ENCODE measurements at regions of chr11 and their contacts with region 1.

Region 1: GRCh38 chr11:6362873-6363678 is 27.2 kb upstream of the SMPD1 start:
- DNase-seq: peak; percentile 81 to 82
- ATAC-seq: peak; percentile 95 to 99
- H3K4me3 ChIP-seq: no peak overlapping the region
- H3K27ac ChIP-seq: no peak overlapping the region
- H3K4me1 ChIP-seq: peaks cover 10% of the 10 kb centered on the region; the same call in 2 of the 3 replicates
- CTCF ChIP-seq: peak; percentile 81
- EP300 ChIP-seq: no peak
- POLR2A ChIP-seq: no peak
- RAD21 ChIP-seq: peak; percentile 79 to 87

Region 2: GRCh38 chr11:6022956-6023355 is 340.1 kb before region 1 on chr11:
- CTCF ChIA-PET with region 1: interaction called, 50 read pairs
- POLR2A ChIA-PET with region 1: no interaction called
- DNase-seq: peak; percentile 13 to 57
- ATAC-seq: peak; percentile 82
- H3K4me3 ChIP-seq: no peak overlapping the region
- H3K27ac ChIP-seq: no peak overlapping the region
- H3K4me1 ChIP-seq: no peaks in the 10 kb centered on the region
- CTCF ChIP-seq: peak; percentile 46
- EP300 ChIP-seq: no peak
- POLR2A ChIP-seq: no peak
- RAD21 ChIP-seq: peak; percentile 61 to 68

Region 3: DNA sequence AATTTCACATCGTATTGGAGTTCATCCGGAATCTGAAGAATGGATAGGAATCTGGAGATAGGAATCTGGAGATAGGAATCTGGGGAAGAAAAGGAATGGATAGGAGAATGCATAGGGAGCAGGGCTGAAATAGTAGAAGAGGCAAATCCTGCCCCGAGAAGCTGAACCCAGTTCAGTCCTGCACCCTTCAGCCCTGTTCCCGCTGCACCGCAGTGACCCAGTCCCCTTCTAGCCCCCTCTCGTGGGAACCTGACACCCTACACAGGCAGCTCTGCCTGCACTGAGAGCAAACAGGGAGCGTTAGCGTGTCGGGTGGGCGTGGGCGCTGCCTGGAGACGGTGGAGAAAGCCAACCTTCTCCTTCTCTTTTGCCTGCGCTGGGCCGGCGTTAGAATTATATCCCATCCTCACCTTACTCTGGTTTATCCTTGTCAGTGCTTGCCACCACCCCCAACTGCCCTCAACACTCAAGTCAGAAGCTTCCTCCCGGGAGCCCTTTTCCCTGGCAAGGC is 104.5 kb before region 1 on chr11:
- CTCF ChIA-PET with region 1: interaction called, 12 read pairs
- POLR2A ChIA-PET with region 1: no interaction called
- DNase-seq: no peak
- ATAC-seq: peak in 1 of 2 experiments; percentile 39; a peak in 3 of 6 replicates
- H3K4me3 ChIP-seq: peak overlapping the region; percentile 47
- H3K27ac ChIP-seq: no peak overlapping the region
- H3K4me1 ChIP-seq: no peaks in the 10 kb centered on the region; the same call in 2 of the 3 replicates
- CTCF ChIP-seq: no peak
- EP300 ChIP-seq: no peak
- POLR2A ChIP-seq: no peak
- RAD21 ChIP-seq: no peak

Region 4: GRCh38 chr11:6285019-6285418 is 78.1 kb before region 1 on chr11:
- CTCF ChIA-PET with region 1: no interaction called
- POLR2A ChIA-PET with region 1: no interaction called
- DNase-seq: no peak
- ATAC-seq: no peak
- H3K4me3 ChIP-seq: no peak overlapping the region
- H3K27ac ChIP-seq: no peak overlapping the region
- H3K4me1 ChIP-seq: peaks cover 9% of the 10 kb centered on the region; the same call in 1 of the 3 replicates
- CTCF ChIP-seq: no peak
- EP300 ChIP-seq: no peak
- POLR2A ChIP-seq: no peak
- RAD21 ChIP-seq: no peak

Region 5: GRCh38 chr11:6315811-6316425 is 47.2 kb before region 1 on chr11:
- CTCF ChIA-PET with region 1: interaction called, 34 read pairs
- POLR2A ChIA-PET with region 1: interaction called, 3 read pairs
- DNase-seq: peak; percentile 58 to 82
- ATAC-seq: peak; percentile 62 to 75
- H3K4me3 ChIP-seq: no peak overlapping the region
- H3K27ac ChIP-seq: no peak overlapping the region
- H3K4me1 ChIP-seq: peaks cover 5% of the 10 kb centered on the region; the same call in 2 of the 3 replicates
- CTCF ChIP-seq: peak; percentile 65
- EP300 ChIP-seq: no peak
- POLR2A ChIP-seq: no peak
- RAD21 ChIP-seq: peak; percentile 69 to 74

Region 6: DNA sequence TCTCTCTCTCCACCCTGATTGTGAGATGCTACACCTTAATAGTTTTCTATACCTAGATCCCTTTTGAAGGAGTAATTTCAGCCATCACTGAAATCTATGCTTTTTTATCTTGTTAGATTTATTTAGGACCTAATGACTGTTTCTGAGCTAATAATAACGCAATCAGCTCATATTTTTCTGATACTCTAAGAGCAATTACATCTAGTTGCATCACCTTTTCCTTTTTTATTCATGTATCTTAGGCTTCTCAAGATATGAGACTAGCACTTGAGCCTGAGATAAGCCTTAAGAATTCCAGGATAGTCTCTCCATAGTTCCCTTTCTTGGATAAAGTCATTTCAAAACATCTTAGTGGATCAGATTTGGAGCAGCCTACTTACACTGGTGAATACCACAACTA is 17.7 kb before region 1 on chr11:
- CTCF ChIA-PET with region 1: interaction called, 25 read pairs
- POLR2A ChIA-PET with region 1: no interaction called
- DNase-seq: no peak
- ATAC-seq: no peak
- H3K4me3 ChIP-seq: no peak overlapping the region
- H3K27ac ChIP-seq: no peak overlapping the region
- H3K4me1 ChIP-seq: no peaks in the 10 kb centered on the region
- CTCF ChIP-seq: no peak
- EP300 ChIP-seq: no peak
- POLR2A ChIP-seq: no peak
- RAD21 ChIP-seq: no peak